ENCODE measurements at regions of chr9 and their contacts with region 1.

Region 1: DNA sequence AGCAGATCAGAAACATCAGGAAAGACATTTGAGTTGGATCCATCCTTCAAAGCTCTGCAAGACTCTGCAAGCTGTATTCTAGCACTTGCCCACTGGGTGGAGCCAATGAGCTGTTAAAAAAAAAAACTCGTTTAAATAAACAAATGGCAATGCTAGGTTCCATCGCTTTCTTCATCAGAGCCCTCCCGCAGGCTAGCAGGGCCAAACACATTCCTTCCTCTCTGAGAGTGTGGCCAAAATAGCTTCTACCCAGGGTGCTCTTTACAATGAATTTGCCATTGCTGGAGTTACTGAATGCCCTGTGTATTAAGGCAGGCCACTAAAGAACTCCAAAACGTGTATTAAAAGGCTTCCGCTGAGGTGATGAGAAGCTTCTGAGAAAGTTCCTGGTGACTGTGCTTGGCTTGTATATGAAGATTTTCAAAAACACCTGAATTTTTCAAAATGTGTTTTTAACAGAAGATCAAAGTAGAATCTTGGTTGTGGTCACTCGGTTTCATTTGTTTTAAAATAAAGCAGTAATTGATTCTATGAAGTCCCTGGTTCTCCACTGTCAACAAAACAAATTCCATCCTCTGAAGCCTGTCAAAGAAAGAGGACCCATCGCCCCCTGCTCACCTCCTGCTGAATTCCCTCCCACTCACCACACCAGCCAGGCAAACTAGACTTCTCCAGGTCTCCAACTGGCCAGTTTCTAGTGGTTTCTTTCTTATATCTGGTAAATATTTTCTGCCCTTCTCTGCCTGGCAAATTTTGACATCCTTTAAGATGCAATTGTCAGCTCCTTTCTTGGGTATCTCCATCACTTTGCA is 36.5 kb upstream of the EQTN start:
- DNase-seq: peak; percentile 62
- H3K4me3 ChIP-seq: no peak overlapping the region
- H3K27ac ChIP-seq: no peak overlapping the region
- H3K4me1 ChIP-seq: peaks cover 7% of the 10 kb centered on the region
- H3K27me3 ChIP-seq: no peaks in the 10 kb centered on the region
- CTCF ChIP-seq: peak; percentile 69 to 80

Region 2: DNA sequence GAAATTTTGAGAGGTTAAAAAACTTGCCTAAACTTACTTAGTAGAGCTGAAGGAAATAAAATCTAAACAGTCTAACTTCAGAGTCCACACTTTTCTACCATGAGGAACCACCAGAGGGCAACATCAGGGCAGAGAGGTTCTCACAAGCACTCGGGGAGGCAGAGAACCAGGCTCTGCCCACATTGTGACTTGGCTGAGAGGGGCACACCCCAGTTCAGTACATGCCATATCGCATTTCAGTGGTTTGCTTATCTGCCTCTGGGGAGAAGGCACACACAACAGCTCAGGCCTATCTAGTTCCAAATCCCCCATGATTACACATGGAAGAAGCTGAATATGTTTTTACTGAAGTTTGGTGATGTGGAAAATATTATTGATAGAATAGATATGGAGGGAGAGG is 85.7 kb before region 1 on chr9:
- CTCF ChIA-PET with region 1: no interaction called
- dilution Hi-C with region 1: no loop called
- in situ Hi-C with region 1: no loop called
- intact Hi-C with region 1: no loop called
- DNase-seq: peak; percentile 56
- H3K4me3 ChIP-seq: no peak overlapping the region
- H3K27ac ChIP-seq: no peak overlapping the region
- H3K4me1 ChIP-seq: no peaks in the 10 kb centered on the region
- H3K27me3 ChIP-seq: no peaks in the 10 kb centered on the region
- CTCF ChIP-seq: peak; percentile 66 to 79

Region 3: DNA sequence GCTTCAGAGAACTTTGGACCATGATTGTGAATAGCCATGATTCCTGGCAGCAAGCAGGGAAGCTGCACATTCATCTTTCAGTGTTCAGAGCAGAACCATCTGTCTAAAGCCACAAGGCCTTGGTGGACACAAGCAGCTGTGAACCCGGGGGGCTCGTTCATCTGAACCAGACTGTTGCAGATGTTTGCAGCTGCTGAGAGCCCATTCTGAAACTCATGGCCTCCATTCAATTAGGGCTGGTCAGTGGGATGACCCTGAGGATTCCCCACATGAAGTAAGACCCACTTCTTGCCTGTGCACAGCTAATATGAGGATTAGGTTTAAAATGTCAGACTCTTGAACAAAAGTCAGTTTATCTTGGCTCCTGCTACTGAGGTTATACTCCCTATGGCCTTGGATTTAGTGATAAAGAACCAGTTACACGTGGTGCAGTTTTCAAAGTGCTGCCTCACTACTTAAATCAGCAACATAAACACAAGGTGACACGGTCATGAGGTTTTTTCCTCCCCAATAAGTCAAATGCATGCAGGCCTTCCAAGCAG is 80.8 kb after region 1 on chr9:
- CTCF ChIA-PET with region 1: no interaction called
- dilution Hi-C with region 1: no loop called
- in situ Hi-C with region 1: no loop called
- intact Hi-C with region 1: loop called (anchors 5 kb)
- DNase-seq: no peak
- H3K4me3 ChIP-seq: peak overlapping the region in 2 of 3 experiments; percentile 41 to 60
- H3K27ac ChIP-seq: peak overlapping the region; percentile 48
- H3K4me1 ChIP-seq: peaks cover 20% of the 10 kb centered on the region
- H3K27me3 ChIP-seq: no peaks in the 10 kb centered on the region
- CTCF ChIP-seq: no peak

Region 4: GRCh38 chr9:27548055-27548741 is 214.8 kb after region 1 on chr9:
- CTCF ChIA-PET with region 1: interaction called, 3 read pairs
- dilution Hi-C with region 1: no loop called
- in situ Hi-C with region 1: loop called in 1 of 2 experiments (anchors 5 kb)
- intact Hi-C with region 1: loop called (anchors 1 kb)
- DNase-seq: peak; percentile 35
- H3K4me3 ChIP-seq: no peak overlapping the region
- H3K27ac ChIP-seq: no peak overlapping the region
- H3K4me1 ChIP-seq: no peaks in the 10 kb centered on the region
- H3K27me3 ChIP-seq: no peaks in the 10 kb centered on the region
- CTCF ChIP-seq: peak; percentile 46 to 49

Region 5: GRCh38 chr9:27714388-27714787 is 380.9 kb after region 1 on chr9:
- CTCF ChIA-PET with region 1: no interaction called
- dilution Hi-C with region 1: no loop called
- in situ Hi-C with region 1: loop called in 1 of 2 experiments (anchors 25 kb)
- intact Hi-C with region 1: loop called (anchors 5 kb)
- DNase-seq: no peak
- H3K4me3 ChIP-seq: no peak overlapping the region
- H3K27ac ChIP-seq: no peak overlapping the region
- H3K4me1 ChIP-seq: no peaks in the 10 kb centered on the region
- H3K27me3 ChIP-seq: no peaks in the 10 kb centered on the region
- CTCF ChIP-seq: peak; percentile 9 to 40

Measured in mammary epithelial cell (primary cell).